A673 (cell line): ENCODE measurements at regions of chr22 and their contacts with region 1.

Region 1: GRCh38 chr22:43884600-43885325 is 7.0 kb downstream of the PNPLA5 start:
- DNase-seq: peak; percentile 72
- H3K4me3 ChIP-seq: no peak overlapping the region
- H3K27ac ChIP-seq: no peak overlapping the region
- H3K4me1 ChIP-seq: no peaks in the 10 kb centered on the region
- H3K27me3 ChIP-seq: peaks cover 23% of the 10 kb centered on the region
- CTCF ChIP-seq: peak; percentile 85

Region 2: GRCh38 chr22:43867839-43868652 is 16.7 kb before region 1 on chr22:
- CTCF ChIA-PET with region 1: interaction called, 12 read pairs
- POLR2A ChIA-PET with region 1: no interaction called
- intact Hi-C with region 1: no loop called
- DNase-seq: peak; percentile 70
- H3K4me3 ChIP-seq: no peak overlapping the region
- H3K27ac ChIP-seq: no peak overlapping the region
- H3K4me1 ChIP-seq: no peaks in the 10 kb centered on the region
- H3K27me3 ChIP-seq: peaks cover 36% of the 10 kb centered on the region
- CTCF ChIP-seq: no peak

Region 3: DNA sequence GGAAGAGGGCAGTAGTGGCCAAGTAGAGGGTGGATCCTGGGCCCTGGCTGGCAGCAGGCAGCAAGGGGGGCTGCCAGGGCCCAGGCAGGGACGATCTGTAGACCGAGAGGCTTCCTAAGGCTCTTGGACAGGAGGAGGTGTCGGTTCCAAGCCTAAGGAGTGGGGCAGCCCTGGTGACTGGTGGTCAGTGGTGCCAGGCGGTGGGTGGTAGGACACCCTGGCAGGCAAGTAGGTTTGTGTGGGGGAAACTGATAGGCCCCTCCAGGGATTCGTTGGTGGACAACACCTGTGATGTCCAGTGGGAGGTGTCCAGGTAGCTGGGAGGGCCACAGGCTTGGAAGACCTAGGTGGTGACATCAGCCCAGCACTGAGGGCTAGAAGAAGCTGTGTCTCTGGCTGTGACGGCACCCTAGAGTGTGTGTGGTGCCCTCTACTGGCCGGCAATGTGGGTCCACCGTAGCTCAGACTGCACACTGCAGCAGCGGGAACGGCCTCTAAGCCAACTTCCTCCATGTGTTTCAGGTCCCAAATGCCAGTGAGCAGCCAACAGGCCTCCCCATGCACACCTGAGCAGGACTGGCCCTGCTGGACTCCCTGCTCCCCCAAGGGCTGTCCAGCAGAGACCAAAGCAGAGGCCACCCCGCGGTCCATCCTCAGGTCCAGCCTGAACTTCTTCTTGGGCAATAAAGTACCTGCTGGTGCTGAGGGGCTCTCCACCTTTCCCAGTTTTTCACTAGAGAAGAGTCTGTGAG is 61.0 kb after region 1 on chr22:
- CTCF ChIA-PET with region 1: interaction called, 27 read pairs
- POLR2A ChIA-PET with region 1: no interaction called
- intact Hi-C with region 1: loop called (anchors 5 kb)
- DNase-seq: peak; percentile 82
- H3K4me3 ChIP-seq: no peak overlapping the region
- H3K27ac ChIP-seq: no peak overlapping the region
- H3K4me1 ChIP-seq: peaks cover 8% of the 10 kb centered on the region
- H3K27me3 ChIP-seq: no peaks in the 10 kb centered on the region
- CTCF ChIP-seq: peak; percentile 85

Region 4: DNA sequence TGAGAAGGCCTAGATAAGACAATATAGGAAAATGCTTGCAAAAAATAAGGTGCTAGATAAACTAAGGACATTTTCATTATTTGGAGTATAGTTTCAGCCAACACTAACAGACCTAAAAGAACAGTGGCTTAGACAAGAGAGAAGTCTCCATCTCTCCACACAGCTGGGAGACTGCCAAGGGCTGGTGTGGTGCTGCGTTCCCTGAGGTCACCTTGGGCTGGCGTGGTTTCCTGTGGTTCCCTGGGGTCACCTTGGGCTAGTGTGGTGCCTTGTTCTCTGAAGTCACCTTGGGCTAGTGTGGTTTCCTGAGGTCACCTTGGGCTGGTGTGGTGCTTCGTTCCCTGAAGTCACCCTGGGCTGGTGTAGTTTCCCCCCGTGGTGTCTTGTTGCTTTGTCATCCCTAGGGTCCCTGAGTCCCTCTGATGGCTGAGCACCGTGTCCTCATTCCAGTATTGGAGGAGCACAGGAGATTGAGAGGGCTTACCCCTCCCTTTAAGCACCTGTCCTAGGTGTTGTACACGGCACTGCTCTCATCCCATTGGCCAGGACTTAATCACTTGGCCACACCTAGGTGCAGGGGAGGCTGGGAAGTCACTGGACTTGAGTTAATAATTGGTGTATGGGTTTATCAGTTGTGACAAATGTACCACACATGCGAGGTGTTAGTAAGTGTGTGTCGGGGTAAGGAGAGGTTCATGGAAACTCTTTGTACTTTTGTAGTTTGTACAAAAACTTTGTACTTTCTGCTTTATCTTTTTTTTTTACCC is 85.4 kb after region 1 on chr22:
- CTCF ChIA-PET with region 1: no interaction called
- POLR2A ChIA-PET with region 1: no interaction called
- intact Hi-C with region 1: no loop called
- DNase-seq: no peak
- H3K4me3 ChIP-seq: no peak overlapping the region
- H3K27ac ChIP-seq: no peak overlapping the region
- H3K4me1 ChIP-seq: no peaks in the 10 kb centered on the region
- H3K27me3 ChIP-seq: no peaks in the 10 kb centered on the region
- CTCF ChIP-seq: no peak